ENCODE measurements at regions of chr6 and their contacts with region 1.

Region 1: DNA sequence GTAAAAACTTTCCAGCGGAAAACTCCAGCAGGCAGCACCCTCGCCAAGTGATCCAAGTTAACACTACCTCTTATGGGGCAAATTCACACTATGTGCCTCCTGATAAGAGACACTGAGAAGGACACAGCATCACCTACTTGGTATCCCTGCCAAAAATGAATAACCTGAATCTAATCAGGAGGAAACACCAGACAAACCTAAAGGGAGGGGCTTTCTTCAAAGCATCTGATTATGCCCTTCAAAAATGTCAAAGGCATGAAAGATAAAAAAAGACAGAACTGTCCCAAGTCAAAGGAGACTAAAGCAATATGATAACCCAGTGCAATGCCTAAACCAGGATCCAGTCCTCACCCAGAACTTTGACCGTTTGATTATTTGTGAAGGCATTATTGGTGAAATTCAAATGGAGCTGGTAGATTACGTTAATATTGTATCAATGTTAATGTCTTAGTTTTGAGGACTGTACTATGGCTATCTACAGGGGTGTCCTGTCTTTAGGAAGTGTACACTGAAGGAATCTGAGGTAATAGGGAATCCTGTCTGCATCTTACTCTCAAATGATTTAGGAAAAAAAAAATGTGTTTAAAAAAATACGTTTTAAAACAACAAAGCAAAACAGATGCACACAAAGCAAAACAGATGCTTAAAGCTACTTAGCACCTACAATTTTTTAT is 8.3 kb downstream of the TBC1D7 start:
- DNase-seq: no peak
- H3K4me3 ChIP-seq: no peak overlapping the region
- H3K27ac ChIP-seq: no peak overlapping the region
- H3K4me1 ChIP-seq: no peaks in the 10 kb centered on the region
- H3K27me3 ChIP-seq: no peaks in the 10 kb centered on the region

Region 2: GRCh38 chr6:12911387-12911960 is 408.6 kb before region 1 on chr6:
- in situ Hi-C with region 1: loop called (anchors 10 kb)
- DNase-seq: peak; percentile 68
- H3K4me3 ChIP-seq: no peak overlapping the region
- H3K27ac ChIP-seq: no peak overlapping the region
- H3K4me1 ChIP-seq: no peaks in the 10 kb centered on the region
- H3K27me3 ChIP-seq: peaks cover 7% of the 10 kb centered on the region

Region 3: GRCh38 chr6:13653296-13653695 is 333.3 kb after region 1 on chr6:
- in situ Hi-C with region 1: no loop called
- DNase-seq: peak; percentile 52
- H3K4me3 ChIP-seq: no peak overlapping the region
- H3K27ac ChIP-seq: no peak overlapping the region
- H3K4me1 ChIP-seq: no peaks in the 10 kb centered on the region
- H3K27me3 ChIP-seq: no peaks in the 10 kb centered on the region

Region 4: GRCh38 chr6:13733178-13733887 is 413.3 kb after region 1 on chr6:
- in situ Hi-C with region 1: no loop called
- DNase-seq: peak; percentile 92
- H3K4me3 ChIP-seq: peak overlapping the region; percentile 42
- H3K27ac ChIP-seq: no peak overlapping the region
- H3K4me1 ChIP-seq: peaks cover 29% of the 10 kb centered on the region
- H3K27me3 ChIP-seq: no peaks in the 10 kb centered on the region

Region 5: GRCh38 chr6:14270925-14271791 is 951.1 kb after region 1 on chr6:
- in situ Hi-C with region 1: no loop called
- DNase-seq: peak; percentile 95
- H3K4me3 ChIP-seq: no peak overlapping the region
- H3K27ac ChIP-seq: peak overlapping the region; percentile 81
- H3K4me1 ChIP-seq: peaks cover 20% of the 10 kb centered on the region
- H3K27me3 ChIP-seq: no peaks in the 10 kb centered on the region

Measured in GM23248 (cell line).